ENCODE measurements at regions of chr11 and their contacts with region 1.

Region 1: GRCh38 chr11:61756452-61757212 is 4.2 kb downstream of the MYRF start:
- DNase-seq: peak; percentile 94
- ATAC-seq: peak; percentile 84
- H3K4me3 ChIP-seq: peak overlapping the region; percentile 32 to 69 (median 66)
- H3K27ac ChIP-seq: peak overlapping the region; percentile 100
- H3K4me1 ChIP-seq: peaks cover 71% of the 10 kb centered on the region
- H3K27me3 ChIP-seq: no peaks in the 10 kb centered on the region
- CTCF ChIP-seq: peak; percentile 10; the same call in 1 of the 2 replicates
- EP300 ChIP-seq: peak in 1 of 2 experiments; percentile 53; a peak in 2 of 4 replicates
- POLR2A ChIP-seq: peak in 1 of 2 experiments; percentile 96; a peak in 2 of 4 replicates
- RAD21 ChIP-seq: peak; percentile 33; the same call in 1 of the 2 replicates

Region 2: GRCh38 chr11:61769169-61769920 is 12.7 kb after region 1 on chr11:
- CTCF ChIA-PET with region 1: interaction called, 47 read pairs
- POLR2A ChIA-PET with region 1: interaction called, 92 read pairs
- in situ Hi-C with region 1: no loop called
- intact Hi-C with region 1: no loop called
- DNase-seq: peak; percentile 90
- ATAC-seq: peak; percentile 90
- H3K4me3 ChIP-seq: peak overlapping the region; percentile 46 to 66 (median 56); a peak in 5 of 6 replicates
- H3K27ac ChIP-seq: peak overlapping the region; percentile 91
- H3K4me1 ChIP-seq: peaks cover 81% of the 10 kb centered on the region
- H3K27me3 ChIP-seq: no peaks in the 10 kb centered on the region; a peak in 1 of 5 replicates
- CTCF ChIP-seq: peak; percentile 85
- EP300 ChIP-seq: peak; percentile 58 to 83; a peak in 3 of 4 replicates
- POLR2A ChIP-seq: peak in 1 of 2 experiments; percentile 30; a peak in 1 of 4 replicates
- RAD21 ChIP-seq: peak; percentile 91

Region 3: DNA sequence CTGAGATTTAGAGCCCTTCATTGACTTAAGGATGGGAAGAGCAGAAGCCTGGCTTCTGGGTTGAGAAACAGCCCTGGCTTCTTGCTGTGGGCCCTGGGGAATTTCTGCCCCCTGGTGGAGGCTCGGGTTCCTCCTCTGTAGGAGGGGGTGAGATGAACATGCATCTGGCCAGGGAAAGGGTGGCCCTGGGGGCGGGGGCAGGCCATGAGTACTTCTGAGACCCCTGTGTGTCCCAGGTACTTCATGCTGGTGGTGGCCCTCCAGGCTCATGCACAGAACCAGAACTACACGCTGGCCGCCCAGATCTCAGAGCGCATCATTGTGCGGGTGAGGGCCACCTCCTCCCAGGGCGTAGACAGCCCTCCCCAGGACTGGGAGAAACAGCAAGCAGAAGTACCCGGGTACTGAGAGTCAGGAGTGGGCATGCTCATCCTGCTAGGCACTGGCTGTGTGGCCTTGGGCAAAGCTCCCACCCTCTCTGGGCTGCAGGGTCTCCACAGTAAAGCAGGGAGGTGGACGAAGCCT is 20.0 kb after region 1 on chr11:
- CTCF ChIA-PET with region 1: interaction called, 51 read pairs
- POLR2A ChIA-PET with region 1: interaction called, 3 read pairs
- in situ Hi-C with region 1: no loop called
- intact Hi-C with region 1: loop called (anchors 1 kb)
- DNase-seq: peak; percentile 59
- ATAC-seq: peak; percentile 75
- H3K4me3 ChIP-seq: no peak overlapping the region
- H3K27ac ChIP-seq: no peak overlapping the region
- H3K4me1 ChIP-seq: peaks cover 13% of the 10 kb centered on the region
- H3K27me3 ChIP-seq: no peaks in the 10 kb centered on the region; a peak in 1 of 5 replicates
- CTCF ChIP-seq: peak; percentile 77
- EP300 ChIP-seq: no peak
- POLR2A ChIP-seq: no peak
- RAD21 ChIP-seq: peak; percentile 89